Endothelial cell of umbilical vein (primary cell): ENCODE measurements at regions of chr5 and their contacts with region 1.

Region 1: GRCh38 chr5:128498844-128499455 is 39.1 kb downstream of the FBN2 start:
- DNase-seq: peak; percentile 60
- H3K4me3 ChIP-seq: no peak overlapping the region
- H3K27ac ChIP-seq: no peak overlapping the region
- H3K4me1 ChIP-seq: no peaks in the 10 kb centered on the region
- H3K27me3 ChIP-seq: no peaks in the 10 kb centered on the region
- CTCF ChIP-seq: peak in 1 of 2 donors; percentile 15
- POLR2A ChIP-seq: no peak

Region 2: DNA sequence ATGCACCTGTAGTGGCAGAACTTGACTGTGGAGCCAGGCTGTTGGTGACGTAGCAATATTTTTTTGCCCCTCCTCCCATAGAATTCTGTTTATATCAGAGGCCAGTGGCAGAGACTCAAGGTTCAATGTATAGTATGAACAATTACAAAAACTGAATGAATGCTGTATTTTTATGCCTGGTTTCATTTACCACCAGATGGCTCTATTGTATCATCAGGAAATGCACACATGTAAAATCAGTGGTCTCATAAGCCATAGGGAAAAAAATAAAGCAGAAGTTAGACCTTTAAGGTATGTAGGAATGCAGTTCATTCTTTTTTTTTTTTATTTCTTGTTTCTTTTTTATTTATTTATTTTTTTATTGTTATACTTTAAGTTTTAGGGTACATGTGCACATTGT is 752.2 kb before region 1 on chr5:
- CTCF ChIA-PET with region 1: no interaction called
- POLR2A ChIA-PET with region 1: interaction called, 5 read pairs
- dilution Hi-C with region 1: no loop called
- intact Hi-C with region 1: loop called (anchors 2 kb)
- DNase-seq: peak; percentile 27
- H3K4me3 ChIP-seq: no peak overlapping the region
- H3K27ac ChIP-seq: no peak overlapping the region
- H3K4me1 ChIP-seq: no peaks in the 10 kb centered on the region
- H3K27me3 ChIP-seq: peaks cover 7 to 9% of the 10 kb centered on the region in 2 experiments
- CTCF ChIP-seq: peak; percentile 21 to 29
- POLR2A ChIP-seq: no peak

Region 3: DNA sequence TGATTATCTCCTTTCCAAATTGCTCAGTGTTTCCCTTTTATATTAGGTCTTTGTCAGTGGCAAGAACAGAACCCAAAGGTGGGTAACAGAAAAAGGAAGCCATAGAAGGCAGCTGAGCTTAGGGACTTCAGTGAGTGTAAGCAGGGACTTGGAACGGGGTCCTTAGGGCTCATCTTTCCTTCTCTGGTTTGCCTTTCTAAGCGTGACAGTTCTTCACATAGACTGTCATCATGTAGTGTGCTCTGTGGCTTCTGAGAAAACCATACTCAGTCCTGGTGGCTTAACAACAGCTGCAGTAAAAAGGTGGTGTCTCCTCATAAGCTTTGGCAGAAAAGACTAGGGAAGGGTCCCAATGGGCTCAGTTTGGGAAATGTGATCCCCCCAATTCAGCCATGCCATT is 306.6 kb before region 1 on chr5:
- CTCF ChIA-PET with region 1: no interaction called
- POLR2A ChIA-PET with region 1: no interaction called
- dilution Hi-C with region 1: no loop called
- intact Hi-C with region 1: no loop called
- DNase-seq: no peak
- H3K4me3 ChIP-seq: no peak overlapping the region
- H3K27ac ChIP-seq: no peak overlapping the region
- H3K4me1 ChIP-seq: no peaks in the 10 kb centered on the region
- H3K27me3 ChIP-seq: no peaks in the 10 kb centered on the region
- CTCF ChIP-seq: no peak
- POLR2A ChIP-seq: no peak

Region 4: DNA sequence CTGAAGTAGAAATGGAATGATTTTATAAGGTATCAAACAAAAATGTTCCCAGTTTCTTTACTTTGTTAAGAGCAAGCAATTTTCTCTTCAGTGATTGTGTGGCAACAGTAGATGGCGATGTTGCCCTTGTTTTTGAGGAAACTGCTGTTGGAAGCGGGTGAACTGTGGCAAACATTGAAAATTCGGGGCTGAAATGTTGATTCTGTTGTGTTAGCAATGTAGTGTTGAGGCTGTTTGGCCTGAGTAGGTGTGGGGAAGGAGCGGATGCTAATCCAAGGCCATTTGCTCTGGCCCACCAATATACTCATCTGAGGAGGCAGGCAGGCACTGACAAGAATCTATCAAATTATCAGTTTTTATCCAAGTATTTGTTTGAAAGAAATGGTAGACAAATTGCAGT is 285.6 kb before region 1 on chr5:
- CTCF ChIA-PET with region 1: interaction called, 34 read pairs
- POLR2A ChIA-PET with region 1: no interaction called
- dilution Hi-C with region 1: no loop called
- intact Hi-C with region 1: loop called (anchors 1 kb)
- DNase-seq: peak; percentile 68
- H3K4me3 ChIP-seq: no peak overlapping the region
- H3K27ac ChIP-seq: no peak overlapping the region
- H3K4me1 ChIP-seq: no peaks in the 10 kb centered on the region
- H3K27me3 ChIP-seq: no peaks in the 10 kb centered on the region
- CTCF ChIP-seq: peak; percentile 63 to 73
- POLR2A ChIP-seq: no peak

Region 5: GRCh38 chr5:128441941-128442350 is 57.0 kb before region 1 on chr5:
- CTCF ChIA-PET with region 1: no interaction called
- POLR2A ChIA-PET with region 1: no interaction called
- dilution Hi-C with region 1: no loop called
- intact Hi-C with region 1: no loop called
- DNase-seq: no peak
- H3K4me3 ChIP-seq: no peak overlapping the region
- H3K27ac ChIP-seq: no peak overlapping the region
- H3K4me1 ChIP-seq: no peaks in the 10 kb centered on the region
- H3K27me3 ChIP-seq: no peaks in the 10 kb centered on the region
- CTCF ChIP-seq: no peak
- POLR2A ChIP-seq: no peak

Region 6: GRCh38 chr5:128483738-128484137 is 15.2 kb before region 1 on chr5:
- CTCF ChIA-PET with region 1: interaction called, 11 read pairs
- POLR2A ChIA-PET with region 1: no interaction called
- dilution Hi-C with region 1: no loop called
- intact Hi-C with region 1: no loop called
- DNase-seq: no peak
- H3K4me3 ChIP-seq: no peak overlapping the region
- H3K27ac ChIP-seq: no peak overlapping the region
- H3K4me1 ChIP-seq: no peaks in the 10 kb centered on the region
- H3K27me3 ChIP-seq: no peaks in the 10 kb centered on the region
- CTCF ChIP-seq: no peak
- POLR2A ChIP-seq: no peak

Region 7: GRCh38 chr5:128708841-128709240 is 209.9 kb after region 1 on chr5:
- CTCF ChIA-PET with region 1: no interaction called
- POLR2A ChIA-PET with region 1: no interaction called
- dilution Hi-C with region 1: no loop called
- intact Hi-C with region 1: no loop called
- DNase-seq: no peak
- H3K4me3 ChIP-seq: no peak overlapping the region
- H3K27ac ChIP-seq: no peak overlapping the region
- H3K4me1 ChIP-seq: no peaks in the 10 kb centered on the region
- H3K27me3 ChIP-seq: no peaks in the 10 kb centered on the region
- CTCF ChIP-seq: no peak
- POLR2A ChIP-seq: no peak